CD4-positive, alpha-beta T cell (primary cell): ENCODE measurements at regions of chr7 and their contacts with region 1.

Region 1: DNA sequence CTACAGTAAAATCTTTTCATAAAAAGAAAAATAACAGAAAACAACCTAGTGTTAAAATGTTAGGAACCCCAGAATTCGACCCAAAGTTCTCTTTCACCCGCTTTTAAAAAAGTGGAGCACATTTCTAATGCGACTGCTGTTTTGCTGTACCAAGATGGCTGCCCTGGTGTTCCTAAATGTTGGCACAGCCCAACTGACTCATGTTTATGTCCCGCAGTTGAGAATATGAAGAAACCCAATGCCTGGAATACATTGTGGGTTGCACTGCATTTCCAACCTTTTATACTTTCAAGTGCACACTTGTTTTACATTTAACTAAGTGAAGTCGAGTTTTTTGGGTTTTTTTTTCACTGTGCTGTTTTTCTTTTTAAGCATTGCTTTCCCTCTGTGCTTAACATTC is 944 bp downstream of the STEAP1B start:
- DNase-seq: no peak
- ATAC-seq: no peak
- H3K4me3 ChIP-seq: no peak overlapping the region
- H3K4me3 Mint-ChIP-seq: no peak overlapping the region
- H3K27ac ChIP-seq: no peak overlapping the region
- H3K27ac Mint-ChIP-seq: no peak overlapping the region
- H3K4me1 ChIP-seq: peaks cover 7% of the 10 kb centered on the region
- H3K4me1 Mint-ChIP-seq: peaks cover 8% of the 10 kb centered on the region
- H3K27me3 ChIP-seq: peaks cover 0 to 4% of the 10 kb centered on the region in 2 experiments
- H3K27me3 Mint-ChIP-seq: peaks cover 37% of the 10 kb centered on the region
- CTCF ChIP-seq: no peak

Region 2: GRCh38 chr7:22103255-22103969 is 395.6 kb before region 1 on chr7:
- CTCF ChIA-PET with region 1: no interaction called
- POLR2A ChIA-PET with region 1: no interaction called
- intact Hi-C with region 1: loop called in 1 of 2 experiments (anchors 2 kb)
- DNase-seq: peak; percentile 9 to 74 (median 36)
- ATAC-seq: no peak
- H3K4me3 ChIP-seq: no peak overlapping the region
- H3K4me3 Mint-ChIP-seq: no peak overlapping the region
- H3K27ac ChIP-seq: no peak overlapping the region
- H3K27ac Mint-ChIP-seq: no peak overlapping the region
- H3K4me1 ChIP-seq: peaks cover 3% of the 10 kb centered on the region
- H3K4me1 Mint-ChIP-seq: no peaks in the 10 kb centered on the region
- H3K27me3 ChIP-seq: peaks cover 3% of the 10 kb centered on the region in 2 experiments
- H3K27me3 Mint-ChIP-seq: peaks cover 20% of the 10 kb centered on the region
- CTCF ChIP-seq: peak; percentile 73

Region 3: GRCh38 chr7:22110227-22110839 is 388.7 kb before region 1 on chr7:
- CTCF ChIA-PET with region 1: interaction called, 3 read pairs
- POLR2A ChIA-PET with region 1: no interaction called
- intact Hi-C with region 1: loop called in 1 of 2 experiments (anchors 1 kb)
- DNase-seq: peak; percentile 33 to 86 (median 50)
- ATAC-seq: peak; percentile 77
- H3K4me3 ChIP-seq: no peak overlapping the region
- H3K4me3 Mint-ChIP-seq: no peak overlapping the region
- H3K27ac ChIP-seq: no peak overlapping the region
- H3K27ac Mint-ChIP-seq: no peak overlapping the region
- H3K4me1 ChIP-seq: no peaks in the 10 kb centered on the region
- H3K4me1 Mint-ChIP-seq: no peaks in the 10 kb centered on the region
- H3K27me3 ChIP-seq: no peaks in the 10 kb centered on the region
- H3K27me3 Mint-ChIP-seq: peaks cover 5% of the 10 kb centered on the region
- CTCF ChIP-seq: peak; percentile 87

Region 4: GRCh38 chr7:22402250-22402649 is 96.8 kb before region 1 on chr7:
- CTCF ChIA-PET with region 1: no interaction called
- POLR2A ChIA-PET with region 1: no interaction called
- intact Hi-C with region 1: no loop called
- DNase-seq: peak in 2 of 14 experiments; percentile 3 to 51
- ATAC-seq: no peak
- H3K4me3 ChIP-seq: no peak overlapping the region
- H3K4me3 Mint-ChIP-seq: no peak overlapping the region
- H3K27ac ChIP-seq: no peak overlapping the region
- H3K27ac Mint-ChIP-seq: no peak overlapping the region
- H3K4me1 ChIP-seq: peaks cover 11% of the 10 kb centered on the region
- H3K4me1 Mint-ChIP-seq: peaks cover 13% of the 10 kb centered on the region
- H3K27me3 ChIP-seq: no peaks in the 10 kb centered on the region
- H3K27me3 Mint-ChIP-seq: no peaks in the 10 kb centered on the region
- CTCF ChIP-seq: no peak

Region 5: GRCh38 chr7:23013715-23014649 is 514.9 kb after region 1 on chr7 and contains the start of gene HYCC1:
- CTCF ChIA-PET with region 1: no interaction called
- POLR2A ChIA-PET with region 1: no interaction called
- intact Hi-C with region 1: no loop called
- DNase-seq: peak; percentile 97 to 99 (median 98)
- ATAC-seq: peak; percentile 96
- H3K4me3 ChIP-seq: peak within 1 kb of the TSS; percentile 87
- H3K4me3 Mint-ChIP-seq: peak within 1 kb of the TSS; percentile 99
- H3K27ac ChIP-seq: peak within 1 kb of the TSS; percentile 31 to 44
- H3K27ac Mint-ChIP-seq: peak within 1 kb of the TSS; percentile 83
- H3K4me1 ChIP-seq: peaks cover 19% of the 10 kb centered on the region
- H3K4me1 Mint-ChIP-seq: peaks cover 24% of the 10 kb centered on the region
- H3K27me3 ChIP-seq: no peaks in the 10 kb centered on the region
- H3K27me3 Mint-ChIP-seq: no peaks in the 10 kb centered on the region
- CTCF ChIP-seq: peak; percentile 65
- total RNA-seq, gene HYCC1: 12.4 to 13.1 TPM